ENCODE measurements at regions of chr4 and their contacts with region 1.

Region 1: GRCh38 chr4:16516796-16517439 is 290.6 kb upstream of the TAPT1 start:
- DNase-seq: peak; percentile 31 to 94 (median 76)
- H3K4me3 ChIP-seq: peak overlapping the region in 5 of 59 donors; percentile 2 to 32 (median 12)
- H3K27ac ChIP-seq: peak overlapping the region in 54 of 59 donors; percentile 25 to 86 (median 70)
- H3K27me3 ChIP-seq: no peaks in the 10 kb centered on the region
- CTCF ChIP-seq: peak; percentile 31 to 82 (median 69)

Region 2: GRCh38 chr4:16626945-16627344 is 110.0 kb after region 1 on chr4:
- intact Hi-C with region 1: loop called in 1 of 2 experiments (anchors 10 kb)
- DNase-seq: peak in 4 of 10 donors; percentile 40 to 76 (median 68)
- H3K4me3 ChIP-seq: no peak overlapping the region
- H3K27ac ChIP-seq: peak overlapping the region in 49 of 59 donors; percentile 4 to 87 (median 70)
- H3K27me3 ChIP-seq: no peaks in the 10 kb centered on the region
- CTCF ChIP-seq: no peak

Region 3: GRCh38 chr4:16636912-16637630 is 120.2 kb after region 1 on chr4:
- intact Hi-C with region 1: loop called in 1 of 2 experiments (anchors 5 kb)
- DNase-seq: no peak
- H3K4me3 ChIP-seq: no peak overlapping the region
- H3K27ac ChIP-seq: peak overlapping the region in 44 of 59 donors; percentile 1 to 74 (median 42)
- H3K27me3 ChIP-seq: no peaks in the 10 kb centered on the region
- CTCF ChIP-seq: no peak

Region 4: DNA sequence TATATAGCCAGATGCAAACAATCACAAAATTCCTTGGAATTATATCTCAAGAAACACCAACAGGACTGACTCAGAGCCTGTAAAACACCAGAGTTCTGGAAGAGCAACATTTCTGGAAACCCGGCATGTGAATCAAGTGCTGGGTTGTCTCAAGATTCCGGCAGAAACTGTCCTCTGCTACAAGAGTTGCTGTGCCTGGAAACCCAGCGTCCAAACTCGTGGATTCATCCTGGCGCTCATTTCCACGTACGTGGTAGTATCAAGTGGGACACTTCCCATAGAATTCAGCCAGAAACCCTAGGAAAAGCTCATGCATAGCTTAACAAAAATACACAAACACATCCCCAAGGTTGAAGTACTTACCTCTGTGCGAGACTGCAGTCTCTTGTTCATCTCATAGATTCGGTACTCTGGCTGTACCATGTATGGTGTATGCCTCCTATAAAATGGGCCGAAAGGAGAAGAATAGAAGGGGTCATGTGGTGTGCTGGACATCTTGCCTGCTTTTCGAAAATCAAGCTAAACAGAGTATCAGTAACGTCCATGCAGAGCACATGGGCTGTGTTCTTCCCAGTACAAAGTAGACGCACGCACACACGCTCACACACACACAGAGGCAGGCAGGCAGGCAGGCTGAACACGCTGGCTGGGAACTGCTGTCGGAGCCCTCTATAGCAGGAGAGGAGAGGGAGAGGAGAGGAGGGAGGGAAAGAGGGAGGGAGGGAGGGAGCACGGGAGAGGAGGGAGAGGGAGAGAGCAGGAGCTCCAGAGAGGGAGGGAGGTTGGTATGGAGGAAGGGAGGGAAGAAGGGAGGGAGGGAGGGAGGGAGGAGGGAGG is 381.3 kb after region 1 on chr4 and contains the start of gene LDB2:
- intact Hi-C with region 1: loop called in 1 of 2 experiments (anchors 10 kb)
- DNase-seq: peak in 9 of 10 donors; percentile 33 to 80 (median 68)
- H3K4me3 ChIP-seq: peak within 1 kb of the TSS; percentile 36 to 77 (median 63)
- H3K27ac ChIP-seq: peak within 1 kb of the TSS in 55 of 59 donors; percentile 8 to 90 (median 74)
- H3K27me3 ChIP-seq: no peaks in the 10 kb centered on the region
- CTCF ChIP-seq: no peak
- total RNA-seq, gene LDB2: 38.0 to 178 (median 123) TPM

Region 5: GRCh38 chr4:17324386-17324830 is 807.5 kb after region 1 on chr4:
- intact Hi-C with region 1: loop called in 1 of 2 experiments (anchors 5 kb)
- DNase-seq: peak in 4 of 10 donors; percentile 29 to 46 (median 38)
- H3K4me3 ChIP-seq: peak overlapping the region in 26 of 59 donors; percentile 1 to 39 (median 23)
- H3K27ac ChIP-seq: peak overlapping the region in 34 of 59 donors; percentile 6 to 81 (median 62)
- H3K27me3 ChIP-seq: no peaks in the 10 kb centered on the region
- CTCF ChIP-seq: peak; percentile 41 to 83 (median 71)

Region 6: DNA sequence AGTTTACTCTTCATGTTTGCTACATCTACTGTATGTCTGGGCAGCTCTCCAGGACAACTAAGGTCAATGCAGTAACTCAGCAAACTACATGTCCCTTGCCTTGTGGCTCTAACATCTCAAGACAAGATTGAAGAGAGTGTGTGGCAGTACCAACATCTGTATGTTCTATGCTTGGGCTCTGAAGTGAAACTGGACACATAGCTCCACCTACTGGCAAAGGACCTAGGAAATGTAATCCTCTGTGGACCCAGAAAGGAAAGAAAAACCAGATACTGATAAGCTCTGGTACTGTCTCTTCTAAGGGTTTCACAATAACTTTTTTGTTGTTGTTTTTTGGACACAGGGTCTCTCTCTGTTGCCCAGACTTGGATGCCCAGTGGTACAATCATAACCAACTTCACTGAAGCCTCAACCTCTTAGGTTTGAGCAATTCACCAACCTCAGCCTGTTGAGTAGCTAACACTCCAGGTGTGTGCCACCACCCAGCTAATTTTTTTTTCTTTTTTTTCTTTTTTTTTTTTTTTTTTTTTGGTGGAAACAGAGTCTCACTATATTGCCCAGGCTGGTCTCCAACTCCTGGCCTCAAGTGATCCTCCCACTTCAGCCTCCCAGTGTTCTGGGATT is 930.9 kb after region 1 on chr4:
- intact Hi-C with region 1: loop called in 1 of 2 experiments (anchors 10 kb)
- DNase-seq: peak in 4 of 10 donors; percentile 11 to 72 (median 36)
- H3K4me3 ChIP-seq: no peak overlapping the region
- H3K27ac ChIP-seq: no peak overlapping the region
- H3K27me3 ChIP-seq: no peaks in the 10 kb centered on the region
- CTCF ChIP-seq: peak; percentile 33 to 85 (median 74)

Region 7: GRCh38 chr4:17475481-17475880 is 958.6 kb after region 1 on chr4:
- intact Hi-C with region 1: loop called in 1 of 2 experiments (anchors 10 kb)
- DNase-seq: no peak
- H3K4me3 ChIP-seq: no peak overlapping the region
- H3K27ac ChIP-seq: no peak overlapping the region
- H3K27me3 ChIP-seq: no peaks in the 10 kb centered on the region
- CTCF ChIP-seq: no peak

Measured in dorsolateral prefrontal cortex (tissue), 120 donors.